MCF 10A (cell line): ENCODE measurements at regions of chrX and their contacts with region 1.

Region 1: DNA sequence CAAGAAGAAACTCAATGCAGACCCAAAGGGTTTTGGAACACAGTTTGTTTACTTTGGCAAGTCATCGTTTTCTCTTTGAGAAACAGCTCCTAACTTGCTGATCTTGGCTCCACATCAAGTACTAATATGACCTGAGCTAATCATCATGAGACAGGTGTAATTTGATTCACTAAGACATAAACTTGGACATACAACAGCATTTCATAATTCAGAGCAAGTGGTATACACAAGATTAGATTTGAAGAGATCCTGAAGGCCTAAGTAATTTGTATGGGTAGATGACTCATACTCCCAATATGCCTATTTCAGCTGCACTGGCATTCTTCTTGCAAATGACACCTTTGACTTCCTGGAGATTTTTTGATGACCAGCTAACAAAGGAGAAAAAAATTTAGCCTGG is 1521.7 kb downstream of the RPA4 start:
- DNase-seq: peak; percentile 93
- H3K4me3 Mint-ChIP-seq: no peak overlapping the region
- H3K27ac Mint-ChIP-seq: no peak overlapping the region
- H3K4me1 Mint-ChIP-seq: peaks cover 5% of the 10 kb centered on the region
- H3K27me3 Mint-ChIP-seq: peaks cover 14% of the 10 kb centered on the region
- CTCF ChIP-seq: no peak

Region 2: DNA sequence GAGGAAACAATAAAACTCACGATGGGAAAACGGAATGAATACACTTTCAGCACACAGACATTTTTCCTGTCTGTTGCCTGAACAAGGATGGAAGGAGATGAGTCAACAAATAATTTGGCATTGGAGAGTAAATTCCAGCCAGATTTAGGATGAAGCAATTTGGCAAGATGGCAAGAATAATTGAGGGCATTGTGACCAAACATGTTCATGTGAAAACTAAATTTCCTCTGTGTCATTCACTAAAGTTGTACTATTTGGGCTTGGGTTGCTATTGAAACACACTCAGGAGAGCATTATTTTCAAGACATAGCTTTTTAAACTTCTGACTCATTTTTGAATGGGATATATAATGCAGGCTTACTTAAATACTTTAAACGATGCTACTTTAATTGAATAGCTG is 390.3 kb after region 1 on chrX:
- CTCF ChIA-PET with region 1: no interaction called
- POLR2A ChIA-PET with region 1: interaction called, 3 read pairs
- intact Hi-C with region 1: loop called (anchors 2 kb)
- DNase-seq: peak; percentile 87
- H3K4me3 Mint-ChIP-seq: peak overlapping the region; percentile 13
- H3K27ac Mint-ChIP-seq: peak overlapping the region; percentile 71
- H3K4me1 Mint-ChIP-seq: peaks cover 6% of the 10 kb centered on the region
- H3K27me3 Mint-ChIP-seq: peaks cover 22% of the 10 kb centered on the region
- CTCF ChIP-seq: no peak